ENCODE measurements at regions of chr5 and their contacts with region 1.

Region 1: DNA sequence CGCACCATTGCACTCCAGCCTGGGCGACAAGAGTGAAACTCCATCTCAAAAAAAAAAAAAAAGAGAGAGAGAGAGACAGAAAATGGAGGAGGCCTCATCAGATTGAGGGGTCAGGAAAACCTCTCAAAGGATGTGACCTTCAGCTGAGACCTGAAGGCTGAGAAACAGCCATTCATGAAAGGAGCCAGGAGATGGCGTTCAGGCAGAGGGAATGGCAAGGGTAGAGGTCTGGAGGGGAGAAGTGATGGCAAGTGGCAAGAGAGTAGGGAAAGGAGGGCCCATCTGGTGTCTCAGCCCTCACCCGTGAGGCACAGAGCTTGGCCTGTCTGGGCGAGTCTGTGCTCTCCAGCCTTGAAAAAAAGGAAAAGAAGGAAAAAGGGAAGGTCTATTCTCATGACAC is 17.0 kb downstream of the CAMK2A start:
- DNase-seq: peak; percentile 29
- H3K4me3 ChIP-seq: no peak overlapping the region
- CTCF ChIP-seq: peak; percentile 56

Region 2: GRCh38 chr5:150189728-150190502 is 82.6 kb before region 1 on chr5 and contains the start of gene SLC6A7:
- in situ Hi-C with region 1: loop called (anchors 5 kb)
- DNase-seq: no peak
- H3K4me3 ChIP-seq: no peak within 1 kb of the TSS
- CTCF ChIP-seq: no peak

Region 3: DNA sequence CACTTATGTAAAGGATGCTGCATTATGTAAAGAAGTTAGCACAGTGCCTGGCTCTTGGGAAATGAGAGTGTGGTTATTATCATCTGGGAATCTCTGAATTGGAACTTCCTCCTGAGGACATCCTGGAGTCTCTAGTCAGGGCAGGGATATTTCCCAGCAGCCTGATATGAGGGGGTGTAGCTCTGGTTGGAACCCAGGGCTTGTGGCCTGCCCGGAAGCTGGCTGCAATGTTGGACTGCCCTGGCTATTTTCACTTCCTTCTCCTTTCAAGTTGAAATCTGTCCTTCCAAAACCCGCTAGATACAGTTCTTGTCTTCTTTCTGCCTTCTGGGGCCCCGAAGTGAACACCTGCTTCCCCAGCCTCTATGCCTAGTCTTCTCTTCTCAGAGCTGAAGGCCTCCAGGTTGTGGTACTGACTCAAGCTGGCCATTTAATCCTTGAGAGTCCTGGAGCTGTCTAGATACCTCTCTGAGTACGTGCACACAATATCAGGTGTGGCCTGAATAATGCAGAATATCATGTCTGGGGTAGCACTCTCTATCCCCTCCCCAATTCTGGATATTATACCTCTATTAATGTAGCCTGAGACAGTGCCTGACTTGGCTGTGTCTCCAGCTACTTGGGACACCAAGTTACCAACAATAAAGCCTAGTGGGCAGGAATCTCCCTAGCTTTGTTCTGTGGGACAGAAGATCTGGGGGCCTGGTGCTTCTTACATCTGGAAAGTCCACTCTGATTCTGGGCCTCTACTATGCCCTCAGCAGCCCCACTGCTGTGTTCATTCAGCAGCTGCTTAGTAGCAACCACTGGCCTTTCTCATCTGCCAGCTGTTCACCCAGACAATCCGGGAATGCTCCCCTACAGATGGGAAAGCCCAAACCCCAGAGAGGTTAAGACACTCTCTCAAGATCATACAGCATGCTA is 37.7 kb before region 1 on chr5:
- in situ Hi-C with region 1: loop called (anchors 5 kb)
- DNase-seq: no peak
- H3K4me3 ChIP-seq: no peak overlapping the region
- CTCF ChIP-seq: no peak

Region 4: DNA sequence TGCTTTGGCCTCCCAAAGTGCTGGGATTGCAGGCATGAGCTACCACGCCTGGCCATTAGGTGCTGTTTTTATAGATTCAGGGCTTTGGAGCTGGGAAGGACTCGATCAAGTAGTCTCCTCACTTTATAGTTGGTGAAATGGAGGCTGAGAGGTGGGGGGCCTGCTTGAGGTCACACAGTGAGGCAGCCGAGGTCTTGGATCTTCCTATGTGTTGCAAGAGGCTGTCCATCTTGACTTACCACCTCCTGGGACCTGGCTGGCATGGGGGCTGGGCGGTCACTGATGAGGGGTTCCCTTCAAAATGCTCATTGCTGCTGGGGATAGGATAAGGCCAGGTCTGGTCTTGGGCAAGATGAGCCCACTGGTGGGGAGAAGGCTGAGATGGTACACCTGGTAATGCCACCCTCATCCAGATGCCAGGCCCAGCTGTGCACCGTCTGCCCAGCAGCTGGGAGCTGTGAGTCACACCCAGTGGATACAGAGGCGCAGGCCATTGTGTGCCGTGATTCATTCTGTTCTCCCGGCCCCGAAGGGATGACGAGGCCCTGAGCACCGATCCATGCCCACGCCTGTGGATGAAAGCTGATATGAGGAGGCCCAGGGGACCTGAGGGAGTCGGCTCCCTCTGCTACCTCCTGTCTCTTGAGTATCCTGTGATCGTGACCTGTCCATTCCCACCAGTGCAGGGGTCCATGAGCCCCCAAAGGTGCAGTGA is 224.9 kb after region 1 on chr5:
- in situ Hi-C with region 1: no loop called
- DNase-seq: no peak
- H3K4me3 ChIP-seq: no peak overlapping the region
- CTCF ChIP-seq: no peak

Measured in astrocyte of the cerebellum (primary cell).